PC-9 (cell line): ENCODE measurements at regions of chr19 and their contacts with region 1.

Region 1: DNA sequence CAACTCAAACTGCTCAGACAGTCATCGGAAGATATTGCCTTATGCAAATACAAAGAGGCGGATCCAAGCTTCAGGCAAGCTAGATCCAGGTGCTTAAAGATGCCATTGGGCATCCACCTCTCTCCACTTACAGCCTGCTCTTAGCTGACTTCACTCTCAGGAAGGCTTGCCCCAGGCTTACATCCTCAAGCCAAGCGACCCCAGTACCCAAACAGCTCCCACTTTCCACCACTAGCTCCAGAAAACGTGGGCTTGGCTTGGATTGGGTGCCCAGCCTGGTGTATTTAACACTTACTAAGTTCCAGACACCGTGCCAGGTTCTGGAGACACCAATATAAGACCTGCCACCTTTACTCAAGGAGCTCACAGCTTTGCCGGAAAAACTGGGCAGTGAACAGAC is 142.1 kb upstream of the VSTM2B start:
- DNase-seq: no peak
- H3K4me3 ChIP-seq: no peak overlapping the region
- H3K27ac ChIP-seq: no peak overlapping the region
- H3K4me1 ChIP-seq: no peaks in the 10 kb centered on the region
- H3K27me3 ChIP-seq: peaks cover 95% of the 10 kb centered on the region
- CTCF ChIP-seq: no peak

Region 2: GRCh38 chr19:29372921-29373797 is 10.5 kb before region 1 on chr19:
- CTCF ChIA-PET with region 1: no interaction called
- POLR2A ChIA-PET with region 1: no interaction called
- intact Hi-C with region 1: no loop called
- DNase-seq: no peak
- H3K4me3 ChIP-seq: no peak overlapping the region
- H3K27ac ChIP-seq: no peak overlapping the region
- H3K4me1 ChIP-seq: no peaks in the 10 kb centered on the region
- H3K27me3 ChIP-seq: peaks cover 76% of the 10 kb centered on the region
- CTCF ChIP-seq: no peak

Region 3: GRCh38 chr19:29861574-29861973 is 477.9 kb after region 1 on chr19:
- CTCF ChIA-PET with region 1: interaction called, 13 read pairs
- POLR2A ChIA-PET with region 1: no interaction called
- intact Hi-C with region 1: no loop called
- DNase-seq: no peak
- H3K4me3 ChIP-seq: no peak overlapping the region
- H3K27ac ChIP-seq: no peak overlapping the region
- H3K4me1 ChIP-seq: peaks cover 7% of the 10 kb centered on the region; the same call in 1 of the 2 replicates
- H3K27me3 ChIP-seq: no peaks in the 10 kb centered on the region
- CTCF ChIP-seq: no peak